ENCODE measurements at regions of chr2 and their contacts with region 1.

Region 1: DNA sequence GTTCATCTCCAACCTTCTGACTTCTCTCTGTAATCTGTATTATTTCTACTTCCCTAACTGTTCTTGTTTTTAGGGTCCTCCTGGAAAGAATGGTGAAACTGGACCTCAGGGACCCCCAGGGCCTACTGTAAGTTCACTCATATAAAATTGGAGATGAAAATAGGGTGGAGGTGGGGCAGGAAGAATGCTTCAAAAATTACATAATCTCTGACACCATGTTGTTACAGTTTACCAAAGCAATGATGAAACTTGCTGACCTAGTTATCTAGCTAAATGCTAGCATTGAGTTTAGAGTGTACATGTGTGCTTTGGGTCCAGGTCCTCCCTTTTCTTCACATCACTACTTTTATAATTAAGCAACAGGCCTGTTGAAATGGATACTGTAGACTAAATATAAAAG is 23.1 kb downstream of the COL3A1 start:
- DNase-seq: no peak
- ATAC-seq: no peak
- H3K4me3 ChIP-seq: no peak overlapping the region
- H3K4me1 ChIP-seq: no peaks in the 10 kb centered on the region
- CTCF ChIP-seq: no peak

Region 2: DNA sequence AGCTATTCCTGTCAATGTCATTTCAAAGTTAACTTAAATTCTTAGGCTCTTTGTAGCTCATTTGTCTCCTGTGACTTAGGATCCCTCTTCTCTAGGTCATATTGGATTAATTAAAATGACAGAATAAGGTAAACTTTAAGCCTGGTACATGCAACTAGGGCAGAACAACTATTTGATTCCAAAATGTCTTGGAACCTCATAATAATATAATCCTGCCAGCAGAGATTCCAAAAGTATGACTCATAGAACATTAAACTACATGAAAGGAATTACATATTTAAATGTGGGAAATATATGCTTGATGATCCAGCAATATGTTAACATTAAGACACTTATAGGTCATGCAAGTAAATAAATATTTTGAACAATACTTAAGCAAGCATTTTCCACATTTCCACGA is 40.3 kb after region 1 on chr2:
- intact Hi-C with region 1: loop called in 1 of 2 experiments (anchors 5 kb)
- DNase-seq: no peak
- ATAC-seq: no peak
- H3K4me3 ChIP-seq: no peak overlapping the region
- H3K4me1 ChIP-seq: no peaks in the 10 kb centered on the region
- CTCF ChIP-seq: no peak

Region 3: DNA sequence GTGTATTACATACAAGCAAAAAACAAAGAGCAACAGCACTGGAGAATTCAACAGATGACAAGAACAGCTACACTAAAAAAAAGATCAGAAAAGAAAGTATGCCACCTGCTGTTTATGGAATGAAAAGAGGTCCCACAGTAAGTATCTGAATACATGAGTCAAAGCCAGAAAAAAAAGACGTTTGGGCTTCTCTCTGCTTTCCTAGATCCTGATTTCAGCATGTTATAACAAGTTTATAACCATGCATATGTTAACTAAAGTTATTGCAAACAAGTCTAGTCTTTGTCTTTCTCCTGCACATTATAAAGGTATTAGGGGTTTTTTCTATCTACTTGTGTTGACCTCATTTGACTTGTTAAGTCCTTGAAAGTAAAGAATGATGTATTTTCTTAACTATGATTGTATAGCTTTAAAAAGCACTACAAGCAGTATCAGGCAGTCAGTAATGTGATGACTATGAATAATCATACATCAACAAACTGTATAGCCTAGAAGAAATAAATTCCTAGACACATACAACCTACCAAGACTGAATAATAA is 290.8 kb after region 1 on chr2:
- intact Hi-C with region 1: no loop called
- DNase-seq: no peak
- ATAC-seq: peak; percentile 33
- H3K4me3 ChIP-seq: no peak overlapping the region
- H3K4me1 ChIP-seq: no peaks in the 10 kb centered on the region
- CTCF ChIP-seq: no peak